Activated B cell treated with CpG ODN at 0.5 μM for 24 hours (primary cell): ENCODE measurements at regions of chr17 and their contacts with region 1.

Region 1: GRCh38 chr17:34199932-34200534 is 55.1 kb upstream of the CCL2 start:
- DNase-seq: peak; percentile 25
- ATAC-seq: peak; percentile 93
- H3K4me3 Mint-ChIP-seq: no peak overlapping the region
- H3K27ac Mint-ChIP-seq: no peak overlapping the region
- H3K4me1 Mint-ChIP-seq: peaks cover 2% of the 10 kb centered on the region
- H3K27me3 Mint-ChIP-seq: peaks cover 27% of the 10 kb centered on the region
- CTCF ChIP-seq: peak; percentile 99

Region 2: DNA sequence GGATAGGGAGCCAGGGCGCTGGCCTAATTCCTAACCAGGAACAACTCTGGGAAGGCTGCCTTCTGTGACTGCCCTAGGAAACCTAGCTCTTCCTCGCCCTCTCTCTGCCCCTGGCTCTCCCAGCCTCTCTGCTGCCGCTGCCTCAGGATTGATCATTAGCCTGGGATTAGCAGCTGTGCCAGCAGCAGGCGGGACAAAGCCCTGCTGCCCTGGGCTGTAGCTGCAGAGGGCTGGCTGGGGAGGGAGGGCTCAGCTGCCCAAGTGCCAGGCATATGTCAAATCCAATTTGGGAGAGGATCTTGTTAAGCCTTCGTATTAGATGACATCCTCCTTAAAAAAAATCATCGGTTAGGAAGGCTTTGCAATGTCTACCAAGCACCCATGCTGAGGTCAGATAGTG is 89.7 kb before region 1 on chr17:
- CTCF ChIA-PET with region 1: no interaction called
- POLR2A ChIA-PET with region 1: no interaction called
- intact Hi-C with region 1: no loop called
- DNase-seq: no peak
- ATAC-seq: no peak
- H3K4me3 Mint-ChIP-seq: no peak overlapping the region
- H3K27ac Mint-ChIP-seq: no peak overlapping the region
- H3K4me1 Mint-ChIP-seq: no peaks in the 10 kb centered on the region
- H3K27me3 Mint-ChIP-seq: peaks cover 15% of the 10 kb centered on the region
- CTCF ChIP-seq: no peak

Region 3: DNA sequence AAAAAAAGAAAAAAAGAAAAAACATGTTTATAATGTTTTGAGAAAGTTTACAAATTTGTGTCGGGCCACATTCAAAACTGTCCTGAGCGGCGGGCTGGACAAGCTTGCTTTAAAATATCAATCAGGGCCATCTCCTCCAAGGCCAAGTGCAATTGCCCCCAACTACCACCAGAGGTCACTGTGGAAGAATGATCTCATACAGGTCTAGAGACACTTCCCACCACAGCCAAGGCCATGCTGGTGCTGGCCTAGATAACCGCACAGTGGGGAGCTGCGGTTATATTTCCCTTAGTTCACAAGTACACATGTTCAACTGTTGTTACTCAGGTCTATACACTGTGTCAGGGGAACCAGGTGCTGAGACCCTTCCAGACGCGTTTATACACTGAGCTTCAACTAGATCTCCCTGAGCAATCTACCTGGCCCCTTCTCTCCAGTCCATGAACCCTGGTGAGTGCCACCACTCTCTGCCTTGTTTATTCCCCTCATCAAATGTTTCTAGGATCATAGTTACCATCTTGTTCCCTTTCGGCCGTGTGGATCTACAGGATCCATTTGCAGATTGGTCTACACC is 28.7 kb before region 1 on chr17:
- CTCF ChIA-PET with region 1: interaction called, 3 read pairs
- POLR2A ChIA-PET with region 1: no interaction called
- intact Hi-C with region 1: loop called (anchors 1 kb)
- DNase-seq: peak; percentile 18
- ATAC-seq: peak; percentile 49
- H3K4me3 Mint-ChIP-seq: no peak overlapping the region
- H3K27ac Mint-ChIP-seq: no peak overlapping the region
- H3K4me1 Mint-ChIP-seq: no peaks in the 10 kb centered on the region
- H3K27me3 Mint-ChIP-seq: peaks cover 5% of the 10 kb centered on the region
- CTCF ChIP-seq: peak; percentile 83

Region 4: DNA sequence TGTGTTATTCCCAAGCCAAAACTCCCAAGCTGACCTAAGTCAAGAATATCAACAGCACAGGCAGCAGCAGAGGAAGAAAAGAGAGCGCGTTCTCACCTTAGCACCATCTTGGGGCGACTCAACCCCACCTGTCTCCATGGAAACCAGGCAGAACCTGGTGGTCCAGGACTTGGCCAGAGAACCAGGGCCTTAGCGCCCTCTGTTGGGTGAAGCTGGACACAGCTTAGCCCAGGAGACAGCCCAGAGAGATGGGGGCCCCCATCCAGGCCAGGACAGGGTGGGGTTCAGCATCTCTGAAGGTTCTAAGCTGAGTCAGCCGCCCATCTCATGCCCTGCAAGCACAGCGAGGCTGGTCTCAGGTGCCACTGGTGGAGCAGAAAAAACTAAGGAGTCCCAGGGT is 319.2 kb after region 1 on chr17:
- CTCF ChIA-PET with region 1: no interaction called
- POLR2A ChIA-PET with region 1: no interaction called
- intact Hi-C with region 1: loop called (anchors 10 kb)
- DNase-seq: no peak
- ATAC-seq: no peak
- H3K4me3 Mint-ChIP-seq: no peak overlapping the region
- H3K27ac Mint-ChIP-seq: no peak overlapping the region
- H3K4me1 Mint-ChIP-seq: no peaks in the 10 kb centered on the region
- H3K27me3 Mint-ChIP-seq: peaks cover 17% of the 10 kb centered on the region
- CTCF ChIP-seq: no peak

Region 5: DNA sequence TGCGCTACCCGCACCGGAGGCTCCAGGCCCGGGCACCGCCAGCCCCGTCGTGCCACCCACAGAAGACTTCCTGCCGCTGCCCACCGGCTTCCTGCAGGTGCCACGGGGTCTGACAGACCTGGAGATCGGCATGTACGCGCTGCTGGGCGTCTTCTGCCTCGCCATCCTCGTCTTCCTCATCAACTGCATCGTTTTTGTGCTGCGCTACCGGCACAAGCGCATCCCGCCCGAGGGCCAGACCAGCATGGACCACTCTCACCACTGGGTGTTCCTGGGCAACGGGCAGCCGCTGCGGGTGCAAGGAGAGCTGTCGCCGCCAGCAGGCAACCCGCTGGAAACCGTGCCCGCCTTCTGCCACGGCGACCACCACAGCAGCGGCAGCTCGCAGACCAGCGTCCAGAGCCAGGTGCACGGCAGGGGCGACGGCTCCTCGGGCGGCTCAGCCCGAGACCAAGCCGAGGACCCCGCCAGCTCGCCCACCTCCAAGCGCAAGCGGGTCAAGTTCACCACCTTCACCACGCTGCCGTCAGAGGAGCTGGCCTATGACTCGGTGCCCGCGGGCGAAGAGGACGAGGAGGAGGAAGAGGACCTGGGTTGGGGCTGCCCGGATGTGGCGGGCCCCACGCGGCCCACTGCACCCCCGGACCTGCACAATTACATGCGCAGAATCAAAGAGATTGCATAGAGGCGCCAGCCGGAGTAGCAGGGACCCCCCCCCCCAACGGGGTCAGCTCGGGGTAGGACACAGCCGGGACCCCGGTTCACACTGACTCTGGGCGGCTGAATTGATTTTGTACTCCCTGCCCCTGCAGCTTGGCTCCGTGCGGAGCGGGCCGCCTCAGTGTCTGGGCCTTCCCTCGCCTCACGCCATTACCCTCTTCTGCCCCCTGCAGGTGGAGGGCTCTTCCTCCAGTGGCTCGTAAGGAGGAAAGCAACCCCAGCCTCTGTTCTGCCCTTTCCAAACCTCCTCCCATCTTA is 437.8 kb after region 1 on chr17:
- CTCF ChIA-PET with region 1: interaction called, 6 read pairs
- POLR2A ChIA-PET with region 1: no interaction called
- intact Hi-C with region 1: loop called (anchors 1 kb)
- DNase-seq: peak; percentile 53
- ATAC-seq: peak; percentile 95
- H3K4me3 Mint-ChIP-seq: peak overlapping the region; percentile 77
- H3K27ac Mint-ChIP-seq: no peak overlapping the region
- H3K4me1 Mint-ChIP-seq: peaks cover 5% of the 10 kb centered on the region
- H3K27me3 Mint-ChIP-seq: peaks cover 39% of the 10 kb centered on the region
- CTCF ChIP-seq: peak; percentile 38